Left cardiac atrium (tissue), 4 donors: ENCODE measurements at regions of chr1 and their contacts with region 1.

Region 1: GRCh38 chr1:204128964-204129896 is 22.6 kb downstream of the ETNK2 start:
- DNase-seq: peak; percentile 81
- ATAC-seq: peak; percentile 84 to 86

Region 2: DNA sequence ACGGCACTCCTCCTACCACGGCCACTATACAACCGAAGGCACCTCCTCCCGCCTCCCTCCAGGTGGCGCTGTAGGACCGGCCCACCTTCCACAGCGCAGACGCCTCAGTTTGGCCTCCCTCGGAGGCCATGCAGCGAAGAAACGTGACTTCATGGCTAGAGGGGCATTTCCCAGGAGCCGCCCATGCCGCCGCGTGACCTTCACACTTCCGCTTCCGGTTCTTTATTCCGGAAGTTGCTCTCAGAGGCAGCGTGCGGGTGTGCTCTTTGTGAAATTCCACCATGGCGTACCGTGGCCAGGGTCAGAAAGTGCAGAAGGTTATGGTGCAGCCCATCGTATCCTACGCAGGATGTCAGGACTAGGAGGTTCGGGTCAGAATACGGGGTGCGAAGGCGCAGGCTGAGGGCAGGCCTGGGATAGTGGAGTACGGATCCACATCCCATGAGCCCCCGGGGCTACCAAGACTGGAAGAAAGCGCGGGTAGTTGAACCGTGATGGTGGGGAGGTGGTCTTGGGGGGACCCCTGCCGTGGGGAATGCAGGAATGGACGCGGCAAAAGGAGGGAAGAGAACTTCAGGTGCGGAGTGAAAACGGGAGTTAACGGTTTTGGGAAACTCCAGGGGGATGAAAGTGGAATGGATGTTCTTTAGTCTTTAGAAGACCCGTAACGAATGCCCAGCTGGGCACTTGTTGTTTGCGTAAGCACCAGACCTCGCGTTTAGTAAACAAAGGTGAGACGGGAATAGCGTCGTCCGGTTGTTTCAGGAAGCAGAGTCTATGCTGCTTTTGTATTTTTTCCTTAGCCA is 267.6 kb before region 1 on chr1 and contains the start of gene SNRPE:
- intact Hi-C with region 1: loop called in 1 of 2 experiments (anchors 2 kb)
- DNase-seq: peak; percentile 95
- ATAC-seq: peak; percentile 98 to 99
- total RNA-seq, gene SNRPE: 62.5 to 81.5 TPM

Region 3: DNA sequence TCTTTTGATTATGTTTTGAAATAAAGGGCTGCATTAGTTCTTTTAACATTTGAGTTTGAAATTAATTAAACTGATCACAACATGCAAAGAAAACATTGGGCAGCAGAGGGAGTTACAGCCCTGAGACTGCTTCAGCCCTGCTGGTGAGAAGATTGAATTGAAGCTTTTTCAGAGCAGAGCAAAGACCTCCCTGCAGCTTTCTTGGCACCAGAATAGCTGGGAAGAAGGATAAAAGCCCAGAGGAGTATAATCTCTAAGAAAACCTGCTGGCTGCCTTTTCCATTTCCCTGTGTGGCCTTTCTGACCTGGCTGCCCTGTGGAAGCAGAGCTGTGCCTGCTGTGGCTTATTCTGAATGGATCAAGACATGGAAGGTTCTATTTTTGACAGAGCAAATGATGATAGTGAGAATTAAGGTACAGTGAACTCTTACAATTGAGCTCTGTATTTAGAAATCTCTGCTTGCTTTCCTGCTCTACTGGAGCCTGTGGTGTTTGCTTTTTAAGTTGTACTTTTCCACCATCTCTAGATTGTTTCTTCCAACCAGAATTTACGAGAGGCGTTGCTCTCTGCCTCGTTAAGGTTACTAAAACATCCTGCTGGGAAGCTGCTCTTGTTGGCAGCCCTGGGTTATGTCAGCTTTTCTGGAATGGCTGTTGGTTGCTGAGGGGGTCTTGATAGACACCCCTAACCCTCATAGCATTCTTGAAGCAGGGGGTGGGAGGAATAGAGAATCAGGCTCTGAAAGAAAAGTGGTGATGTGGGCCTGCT is 257.9 kb before region 1 on chr1:
- intact Hi-C with region 1: loop called (anchors 2 to 5 kb)
- DNase-seq: no peak
- ATAC-seq: peak; percentile 88 to 90

Region 4: DNA sequence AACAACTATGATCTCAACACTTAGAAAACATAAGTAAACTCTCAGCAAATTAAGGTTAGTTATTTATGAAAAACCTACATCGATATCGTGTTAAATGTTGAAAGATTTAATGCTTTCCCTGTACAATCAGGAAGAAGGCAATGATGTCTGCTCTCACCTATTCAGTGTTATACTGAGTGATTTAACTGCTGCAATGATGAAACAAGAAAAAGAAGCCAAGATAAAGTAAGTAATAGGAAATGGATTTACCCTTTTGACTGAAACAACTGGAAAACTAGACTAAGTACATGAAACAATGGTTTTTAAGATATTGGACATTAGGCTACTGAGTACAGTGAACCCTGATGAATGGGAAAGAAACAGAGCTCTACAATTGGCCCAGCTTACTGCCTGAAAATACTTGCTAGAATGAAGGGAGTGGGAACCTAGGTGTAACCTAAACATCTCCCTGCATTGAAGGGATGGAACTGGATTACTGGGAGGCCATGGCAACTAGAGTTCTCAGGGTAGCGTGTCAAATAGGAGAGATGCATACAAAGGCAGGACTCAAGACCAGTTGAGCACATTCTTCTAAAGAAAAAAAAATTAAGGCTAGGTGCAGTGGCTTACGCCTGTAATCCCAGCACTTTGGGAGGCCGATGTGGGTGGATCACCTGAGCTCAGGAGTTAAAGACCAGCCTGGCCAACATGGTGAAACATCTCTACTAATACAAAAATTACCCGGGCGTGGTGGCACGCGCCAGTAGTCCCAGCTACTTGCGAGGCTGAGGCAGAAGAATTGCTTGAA is 230.6 kb before region 1 on chr1:
- intact Hi-C with region 1: no loop called
- DNase-seq: no peak
- ATAC-seq: no peak

Region 5: DNA sequence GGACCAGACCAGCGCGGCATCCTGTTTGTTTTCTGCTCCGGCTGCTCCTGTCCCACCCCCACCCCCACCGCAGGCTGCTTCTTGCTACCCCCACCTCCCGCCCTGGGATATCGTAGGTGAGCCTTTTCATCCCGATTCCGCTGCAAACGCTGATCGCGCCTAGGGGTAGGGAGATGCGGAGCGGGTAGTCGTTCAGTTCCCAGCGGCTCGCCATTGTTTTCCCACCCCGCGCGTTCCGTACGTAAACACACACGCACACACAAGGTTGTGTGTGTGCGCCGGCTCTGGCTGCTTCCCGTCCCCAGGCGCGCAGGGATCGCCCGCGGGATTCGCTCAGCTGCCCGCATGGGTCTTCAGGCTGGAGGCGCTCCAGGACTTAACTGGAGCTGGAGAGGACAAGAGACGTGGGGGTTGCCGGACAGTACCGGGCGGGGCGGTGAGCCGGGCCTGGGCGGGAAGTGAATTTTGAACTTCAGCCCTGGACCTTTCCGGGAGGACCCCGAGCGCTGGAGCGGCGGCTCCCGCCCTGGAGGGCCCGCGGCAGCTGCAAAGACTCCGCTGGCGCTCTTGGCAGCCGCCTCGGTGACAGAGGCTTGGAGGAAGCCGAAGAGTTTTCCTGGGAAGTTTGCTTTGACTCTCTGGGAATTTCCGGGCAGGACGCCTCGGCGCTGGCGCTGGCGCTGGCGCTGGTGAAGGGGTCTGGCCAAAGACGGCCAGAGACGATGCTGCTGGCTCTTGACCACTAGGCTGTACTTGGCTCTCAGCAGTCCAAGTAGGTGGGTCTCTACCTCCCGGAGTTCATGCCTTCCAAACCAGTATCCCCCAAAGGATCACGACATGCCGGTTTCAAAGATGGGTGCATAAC is 54.7 kb before region 1 on chr1:
- intact Hi-C with region 1: loop called in 1 of 2 experiments (anchors 2 kb)
- DNase-seq: peak; percentile 85
- ATAC-seq: peak; percentile 67 to 72

Region 6: DNA sequence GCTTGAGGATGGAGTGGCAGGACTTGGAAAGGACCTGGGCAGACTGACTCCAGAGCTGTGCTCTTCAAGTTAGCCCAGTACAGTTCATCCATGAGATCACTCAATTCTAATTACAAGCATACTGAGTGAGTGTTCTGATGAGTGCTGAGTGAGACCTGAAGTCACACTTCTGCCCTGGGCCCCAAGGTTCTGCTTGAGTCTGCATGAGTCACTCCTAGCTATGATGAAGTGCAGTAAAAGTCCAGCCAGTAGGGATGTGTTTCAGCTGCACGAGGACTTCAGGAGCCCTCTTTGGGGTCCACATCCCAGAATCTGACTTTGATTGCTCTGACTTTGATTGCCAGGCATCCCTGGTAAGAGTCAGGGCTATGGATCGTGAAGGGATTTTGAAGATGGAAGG is 194.7 kb after region 1 on chr1:
- intact Hi-C with region 1: no loop called
- DNase-seq: no peak
- ATAC-seq: peak; percentile 51 to 84

Region 7: GRCh38 chr1:204431310-204432165 is 302.3 kb after region 1 on chr1:
- intact Hi-C with region 1: no loop called
- DNase-seq: peak; percentile 85
- ATAC-seq: peak; percentile 69 to 81